ENCODE measurements at regions of chr4 and their contacts with region 1.

Region 1: DNA sequence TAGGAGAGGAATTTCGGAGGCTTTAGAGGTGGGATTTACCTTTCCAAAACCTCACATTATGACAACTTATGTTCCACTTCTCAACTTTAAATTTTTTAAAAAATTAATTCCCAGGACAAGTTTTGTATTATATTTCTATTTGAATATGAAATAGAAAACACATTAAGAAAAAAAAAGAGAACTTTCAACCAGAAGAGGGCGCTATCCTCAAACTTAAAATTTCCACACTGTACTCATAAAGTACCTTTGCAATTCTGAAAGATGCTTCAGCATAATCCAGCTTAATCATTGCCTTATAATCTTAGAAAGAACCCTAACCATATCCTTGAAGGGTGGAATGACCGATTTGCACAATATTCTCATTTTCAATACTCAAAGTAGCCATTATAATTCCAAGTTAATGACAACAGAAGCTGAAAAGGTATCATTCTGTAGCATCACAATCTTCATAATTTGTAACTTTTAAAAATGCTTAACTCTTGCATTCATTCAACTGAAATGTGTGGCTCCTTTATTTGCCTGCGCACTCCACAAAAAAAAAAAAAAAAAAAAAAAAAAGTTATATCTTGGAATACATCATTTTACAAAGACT is 158.0 kb downstream of the KCNIP4 start:
- DNase-seq: no peak
- H3K4me3 ChIP-seq: no peak overlapping the region
- CTCF ChIP-seq: no peak

Region 2: DNA sequence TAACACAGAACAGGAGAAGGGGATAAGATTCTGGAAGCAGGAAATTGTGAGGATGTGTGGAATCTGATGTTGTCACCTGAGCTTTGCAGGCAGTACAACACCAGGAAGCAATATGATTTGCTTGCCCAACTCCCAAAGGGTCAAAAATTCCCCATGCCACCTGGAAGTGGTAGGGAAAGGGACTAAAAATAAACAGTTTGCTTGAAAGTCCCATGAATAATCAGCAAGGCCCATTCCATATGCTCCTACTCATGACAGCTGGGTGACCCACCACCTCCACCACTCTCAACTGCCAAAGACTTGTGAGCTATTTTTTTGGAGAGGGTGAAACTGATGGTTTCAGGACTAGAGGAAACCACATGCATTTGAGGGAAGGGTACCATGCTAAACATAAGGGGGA is 10.4 kb before region 1 on chr4:
- CTCF ChIA-PET with region 1: interaction called, 23 read pairs
- POLR2A ChIA-PET with region 1: no interaction called
- DNase-seq: no peak
- H3K4me3 ChIP-seq: no peak overlapping the region
- CTCF ChIP-seq: no peak

Region 3: DNA sequence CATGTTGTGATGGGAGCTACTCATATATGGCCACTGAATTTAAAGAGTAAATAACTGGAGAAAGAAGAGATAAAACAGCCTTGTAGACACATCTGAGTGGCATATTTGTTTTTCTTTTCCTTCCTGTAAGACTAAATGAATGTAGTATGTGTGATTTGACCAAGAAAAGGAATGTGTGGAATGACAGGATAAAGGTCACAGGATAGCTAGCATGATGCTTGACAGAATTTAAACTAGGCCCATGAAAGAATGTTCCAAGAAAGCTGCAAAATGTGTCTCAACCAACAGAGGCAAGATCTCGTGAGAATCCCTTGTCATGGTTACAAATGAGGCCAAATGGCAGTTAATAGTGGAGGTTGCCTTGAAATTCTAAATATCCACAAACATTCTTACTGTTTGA is 21.0 kb after region 1 on chr4:
- CTCF ChIA-PET with region 1: interaction called, 13 read pairs
- POLR2A ChIA-PET with region 1: no interaction called
- DNase-seq: no peak
- H3K4me3 ChIP-seq: no peak overlapping the region
- CTCF ChIP-seq: no peak

Region 4: GRCh38 chr4:22356987-22357596 is 566.6 kb after region 1 on chr4:
- CTCF ChIA-PET with region 1: interaction called, 118 read pairs
- POLR2A ChIA-PET with region 1: no interaction called
- DNase-seq: no peak
- H3K4me3 ChIP-seq: no peak overlapping the region
- CTCF ChIP-seq: peak; percentile 36

Region 5: DNA sequence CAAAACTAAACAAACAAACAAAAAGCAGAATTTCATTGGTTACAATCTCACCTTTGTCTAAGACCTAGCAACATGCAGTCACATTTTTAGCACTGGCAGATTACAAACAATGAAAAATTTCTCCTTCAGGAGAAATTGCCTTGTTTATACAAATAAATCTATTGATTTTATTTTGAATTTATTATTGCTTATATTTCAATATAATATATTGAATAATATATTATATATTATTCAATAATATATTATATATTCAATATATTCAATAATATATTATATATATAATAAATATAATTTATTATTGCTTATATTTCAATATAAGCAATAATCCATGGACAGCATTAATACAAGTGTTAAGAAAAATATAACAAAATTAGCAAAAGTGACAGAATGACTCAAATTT is 593.6 kb after region 1 on chr4:
- CTCF ChIA-PET with region 1: interaction called, 499 read pairs
- POLR2A ChIA-PET with region 1: no interaction called
- DNase-seq: no peak
- H3K4me3 ChIP-seq: no peak overlapping the region
- CTCF ChIP-seq: no peak

Region 6: GRCh38 chr4:22410645-22411247 is 620.2 kb after region 1 on chr4:
- CTCF ChIA-PET with region 1: interaction called, 31 read pairs
- POLR2A ChIA-PET with region 1: no interaction called
- DNase-seq: no peak
- H3K4me3 ChIP-seq: no peak overlapping the region
- CTCF ChIP-seq: peak; percentile 19

Region 7: DNA sequence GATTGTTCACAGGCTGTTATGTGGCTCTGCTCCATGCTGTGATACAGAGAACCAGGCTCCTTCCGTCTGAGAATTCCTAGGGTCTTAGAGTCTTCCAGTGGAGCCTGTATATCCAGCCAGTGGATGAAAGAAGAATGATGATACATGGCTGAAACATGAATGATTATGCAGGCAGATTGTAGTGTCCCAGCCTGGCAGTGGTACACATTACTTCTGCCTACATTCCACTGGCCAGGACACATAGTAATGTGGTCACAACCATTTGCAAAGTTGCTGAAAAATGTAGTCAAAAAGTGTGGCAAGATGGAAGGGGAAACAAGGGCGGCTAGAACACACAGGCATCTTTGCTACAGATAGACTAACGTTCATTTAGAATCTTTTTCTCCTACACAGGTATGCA is 897.7 kb after region 1 on chr4:
- CTCF ChIA-PET with region 1: interaction called, 58 read pairs
- POLR2A ChIA-PET with region 1: no interaction called
- DNase-seq: no peak
- H3K4me3 ChIP-seq: no peak overlapping the region
- CTCF ChIP-seq: no peak